ENCODE measurements at regions of chr2 and their contacts with region 1.

Region 1: GRCh38 chr2:181891966-181892798 is 652 bp downstream of the ITPRID2 start:
- DNase-seq: peak; percentile 91
- H3K4me3 Mint-ChIP-seq: peak overlapping the region; percentile 100
- H3K27ac Mint-ChIP-seq: peak overlapping the region; percentile 97
- H3K4me1 Mint-ChIP-seq: peaks cover 29% of the 10 kb centered on the region
- H3K27me3 Mint-ChIP-seq: peaks cover 27% of the 10 kb centered on the region

Region 2: GRCh38 chr2:180006781-180007579 is 1885.2 kb before region 1 on chr2 and contains the start of gene CWC22:
- intact Hi-C with region 1: loop called (anchors 5 kb)
- DNase-seq: peak; percentile 95
- H3K4me3 Mint-ChIP-seq: peak within 1 kb of the TSS; percentile 94
- H3K27ac Mint-ChIP-seq: peak within 1 kb of the TSS; percentile 97
- H3K4me1 Mint-ChIP-seq: peaks cover 18% of the 10 kb centered on the region
- H3K27me3 Mint-ChIP-seq: no peaks in the 10 kb centered on the region
- total RNA-seq, gene CWC22: 30.0 and 30.2 TPM in 2 replicates

Region 3: GRCh38 chr2:181077128-181077709 is 815.0 kb before region 1 on chr2:
- intact Hi-C with region 1: loop called (anchors 10 kb)
- DNase-seq: peak; percentile 84
- H3K4me3 Mint-ChIP-seq: no peak overlapping the region
- H3K27ac Mint-ChIP-seq: no peak overlapping the region
- H3K4me1 Mint-ChIP-seq: peaks cover 2% of the 10 kb centered on the region
- H3K27me3 Mint-ChIP-seq: no peaks in the 10 kb centered on the region

Region 4: GRCh38 chr2:181523756-181524155 is 368.4 kb before region 1 on chr2:
- intact Hi-C with region 1: loop called (anchors 10 kb)
- DNase-seq: no peak
- H3K4me3 Mint-ChIP-seq: no peak overlapping the region
- H3K27ac Mint-ChIP-seq: no peak overlapping the region
- H3K4me1 Mint-ChIP-seq: peaks cover 2% of the 10 kb centered on the region
- H3K27me3 Mint-ChIP-seq: no peaks in the 10 kb centered on the region

Region 5: GRCh38 chr2:181904022-181904632 is 11.9 kb after region 1 on chr2:
- intact Hi-C with region 1: loop called (anchors 1 kb)
- DNase-seq: peak; percentile 68
- H3K4me3 Mint-ChIP-seq: no peak overlapping the region
- H3K27ac Mint-ChIP-seq: no peak overlapping the region
- H3K4me1 Mint-ChIP-seq: peaks cover 24% of the 10 kb centered on the region
- H3K27me3 Mint-ChIP-seq: no peaks in the 10 kb centered on the region

Region 6: DNA sequence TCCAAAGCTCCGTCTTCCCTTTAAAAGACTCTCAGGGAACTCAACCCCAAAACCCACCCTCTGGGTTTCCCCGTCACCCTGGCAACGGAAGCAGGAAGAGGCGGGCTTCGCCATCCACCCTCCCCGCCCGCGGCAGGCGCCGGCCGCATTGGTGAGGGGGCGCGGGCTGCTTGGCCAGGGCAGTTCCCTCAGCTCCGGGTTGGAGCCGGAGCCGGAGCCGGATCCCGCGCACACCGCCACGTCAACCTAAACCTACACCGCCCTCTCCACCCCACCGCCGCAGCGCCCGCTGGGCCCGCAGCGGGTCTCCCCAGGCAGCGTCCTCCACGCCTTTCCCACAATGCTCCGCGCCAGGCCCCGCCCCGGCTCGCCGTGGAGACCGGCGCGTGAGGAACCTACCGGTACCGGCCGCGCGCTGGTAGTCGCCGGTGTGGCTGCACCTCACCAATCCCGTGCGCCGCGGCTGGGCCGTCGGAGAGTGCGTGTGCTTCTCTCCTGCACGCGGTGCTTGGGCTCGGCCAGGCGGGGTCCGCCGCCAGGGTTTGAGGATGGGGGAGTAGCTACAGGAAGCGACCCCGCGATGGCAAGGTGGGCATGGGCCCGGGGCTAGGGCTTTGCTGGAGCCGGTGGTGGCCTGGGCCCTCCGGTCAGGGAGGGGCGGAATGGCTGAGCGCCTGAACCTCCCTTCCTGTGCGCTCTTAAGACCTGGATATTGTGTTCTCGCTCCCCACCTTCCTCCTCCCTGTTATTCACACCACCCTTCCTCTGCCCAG is 823.9 kb after region 1 on chr2 and contains the start of gene DNAJC10:
- intact Hi-C with region 1: loop called (anchors 5 kb)
- DNase-seq: peak; percentile 97
- H3K4me3 Mint-ChIP-seq: no peak within 1 kb of the TSS
- H3K27ac Mint-ChIP-seq: no peak within 1 kb of the TSS
- H3K4me1 Mint-ChIP-seq: peaks cover 8% of the 10 kb centered on the region
- H3K27me3 Mint-ChIP-seq: peaks cover 11% of the 10 kb centered on the region
- total RNA-seq, gene DNAJC10: 68.2 and 75.1 TPM in 2 replicates